ENCODE measurements at regions of chr12 and their contacts with region 1.

Region 1: GRCh38 chr12:89709157-89709994 is 738 bp upstream of the ATP2B1 start:
- DNase-seq: peak; percentile 99 to 100 (median 99)
- ATAC-seq: peak; percentile 93 to 97 (median 96)
- H3K4me3 ChIP-seq: peak overlapping the region; percentile 81 to 95 (median 92)
- H3K27ac ChIP-seq: peak overlapping the region; percentile 96 to 99 (median 98)
- H3K4me1 ChIP-seq: peaks cover 0 to 31% (median 9%) of the 10 kb centered on the region in 12 donors
- H3K27me3 ChIP-seq: no peaks in the 10 kb centered on the region
- CTCF ChIP-seq: peak in 3 of 12 donors; percentile 11 to 26 (median 14)
- POLR2A ChIP-seq: peak; percentile 81 to 94

Region 2: GRCh38 chr12:89636052-89636775 is 73.2 kb before region 1 on chr12:
- intact Hi-C with region 1: loop called in 1 of 10 experiments (anchors 10 kb)
- DNase-seq: no peak
- ATAC-seq: no peak
- H3K4me3 ChIP-seq: no peak overlapping the region
- H3K27ac ChIP-seq: no peak overlapping the region
- H3K4me1 ChIP-seq: no peaks in the 10 kb centered on the region
- H3K27me3 ChIP-seq: no peaks in the 10 kb centered on the region
- CTCF ChIP-seq: no peak
- POLR2A ChIP-seq: no peak

Region 3: DNA sequence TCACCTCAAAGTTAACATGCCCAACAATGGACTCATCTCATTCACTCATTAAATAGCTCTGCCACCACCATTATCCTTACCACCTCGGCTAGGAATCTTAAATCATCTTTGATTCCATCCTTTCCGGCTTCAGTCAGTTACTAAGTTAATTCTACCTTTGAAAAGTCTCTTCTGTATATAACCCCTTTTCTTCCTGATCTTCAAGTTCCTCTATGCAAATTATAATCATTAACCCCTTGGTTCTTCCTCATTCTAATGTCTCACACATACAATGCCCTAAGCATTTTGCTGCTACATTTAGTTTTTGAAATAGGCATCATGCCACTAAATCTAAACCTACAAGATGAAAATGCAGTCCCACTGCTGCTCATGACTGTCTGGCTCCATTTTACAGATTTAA is 52.3 kb before region 1 on chr12:
- intact Hi-C with region 1: loop called in 2 of 10 experiments (anchors 5 kb)
- DNase-seq: no peak
- ATAC-seq: no peak
- H3K4me3 ChIP-seq: no peak overlapping the region
- H3K27ac ChIP-seq: no peak overlapping the region
- H3K4me1 ChIP-seq: peaks cover 0 to 21% (median 3%) of the 10 kb centered on the region in 12 donors
- H3K27me3 ChIP-seq: no peaks in the 10 kb centered on the region
- CTCF ChIP-seq: no peak
- POLR2A ChIP-seq: no peak

Region 4: DNA sequence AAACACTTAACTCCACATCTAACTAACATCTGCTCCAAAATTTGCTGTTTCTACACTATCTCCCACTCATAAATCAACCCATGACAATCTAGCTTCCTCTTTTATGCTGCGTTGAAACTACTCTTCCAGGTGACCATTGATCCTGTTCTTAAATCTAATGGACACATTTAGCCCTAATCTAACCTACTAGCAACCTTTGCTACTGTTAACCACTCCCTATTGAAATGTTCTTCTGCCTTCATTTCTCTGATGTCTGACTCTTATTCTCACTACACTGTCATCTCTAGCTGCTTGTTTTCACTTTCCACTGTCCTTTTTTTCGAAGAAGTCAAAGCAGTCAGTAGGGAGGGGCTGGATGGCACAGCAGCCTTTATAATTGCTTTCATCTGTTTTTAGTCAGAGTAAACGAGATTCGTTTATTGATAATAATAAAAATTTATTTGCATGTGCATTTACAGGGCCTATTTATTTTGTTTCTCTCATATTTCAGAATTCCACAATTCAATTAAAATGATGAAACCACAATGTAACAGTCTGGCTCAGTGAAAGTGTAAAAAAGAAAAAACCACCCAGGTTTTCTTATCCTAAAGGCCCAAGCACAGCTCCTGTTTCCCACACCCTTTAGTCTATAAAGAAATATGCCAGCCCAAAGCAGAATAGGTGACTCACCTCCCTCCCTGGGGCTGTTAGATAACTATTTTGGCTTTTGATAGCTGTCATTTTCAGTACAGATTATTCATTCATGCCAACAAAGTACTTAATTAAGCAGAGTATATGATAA is 45.6 kb before region 1 on chr12:
- intact Hi-C with region 1: loop called in 2 of 10 experiments (anchors 5 kb)
- DNase-seq: no peak
- ATAC-seq: peak in 1 of 4 donors; percentile 29
- H3K4me3 ChIP-seq: no peak overlapping the region
- H3K27ac ChIP-seq: no peak overlapping the region
- H3K4me1 ChIP-seq: peaks cover 0 to 49% (median 28%) of the 10 kb centered on the region in 12 donors
- H3K27me3 ChIP-seq: no peaks in the 10 kb centered on the region
- CTCF ChIP-seq: no peak
- POLR2A ChIP-seq: no peak

Region 5: GRCh38 chr12:89840162-89840922 is 131.0 kb after region 1 on chr12:
- intact Hi-C with region 1: no loop called
- DNase-seq: no peak
- ATAC-seq: no peak
- H3K4me3 ChIP-seq: no peak overlapping the region
- H3K27ac ChIP-seq: no peak overlapping the region
- H3K4me1 ChIP-seq: no peaks in the 10 kb centered on the region
- H3K27me3 ChIP-seq: peaks cover 0 to 32% (median 0%) of the 10 kb centered on the region in 9 donors
- CTCF ChIP-seq: no peak
- POLR2A ChIP-seq: no peak